Activated CD8-positive, alpha-beta memory T cell treated with anti-CD3 and anti-CD28 coated beads, Interleukin-2, amount 10 ng/mL, durations not matched to agents 7 days and 5 days (primary cell): ENCODE measurements at regions of chr6 and their contacts with region 1.

Region 1: DNA sequence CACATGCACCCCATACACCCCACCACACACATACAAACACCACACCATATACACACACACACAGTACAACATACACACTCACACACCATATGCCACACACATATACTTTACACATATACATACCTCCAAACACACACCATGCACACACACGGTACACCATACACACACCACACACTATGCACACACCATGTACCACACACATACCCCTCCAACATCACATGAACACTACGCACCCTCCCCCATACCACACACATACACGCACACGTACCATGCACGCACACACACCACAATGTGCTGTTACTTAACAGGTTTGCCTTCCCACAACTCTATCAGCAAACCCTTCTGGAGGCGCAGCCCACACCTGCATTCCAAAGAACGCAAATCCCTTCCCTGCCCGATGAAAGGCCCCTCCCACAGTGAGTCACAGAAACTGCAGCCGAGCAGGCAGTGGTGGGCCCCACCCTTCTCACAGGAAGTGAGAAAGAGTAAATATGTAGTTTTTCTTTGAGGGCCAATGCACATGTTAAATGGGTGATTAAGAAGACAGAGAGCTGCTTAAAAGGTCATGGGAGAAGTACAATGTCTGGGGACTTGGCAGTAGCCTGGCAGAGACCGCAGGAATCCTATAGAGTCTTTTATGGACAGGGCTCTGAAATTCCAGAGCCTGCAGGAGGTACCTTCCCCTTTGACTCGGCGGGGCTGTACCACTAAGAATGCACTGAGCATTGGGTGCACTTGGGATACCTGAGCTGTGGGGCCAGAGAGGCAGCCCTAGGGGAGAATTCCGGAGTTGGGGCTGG is 34.1 kb upstream of the EZR start:
- DNase-seq: peak; percentile 94
- ATAC-seq: peak; percentile 80
- H3K4me3 Mint-ChIP-seq: no peak overlapping the region
- H3K27ac Mint-ChIP-seq: no peak overlapping the region
- H3K4me1 Mint-ChIP-seq: peaks cover 25% of the 10 kb centered on the region
- H3K27me3 Mint-ChIP-seq: peaks cover 2% of the 10 kb centered on the region

Region 2: GRCh38 chr6:158819213-158819909 is 33.9 kb before region 1 on chr6 and contains the start of gene EZR:
- CTCF ChIA-PET with region 1: interaction called, 13 read pairs
- DNase-seq: peak; percentile 89
- ATAC-seq: peak; percentile 64
- H3K4me3 Mint-ChIP-seq: peak within 1 kb of the TSS; percentile 99
- H3K27ac Mint-ChIP-seq: peak within 1 kb of the TSS; percentile 86
- H3K4me1 Mint-ChIP-seq: peaks cover 42% of the 10 kb centered on the region
- H3K27me3 Mint-ChIP-seq: no peaks in the 10 kb centered on the region
- total RNA-seq, gene EZR: 187 to 214 TPM

Region 3: GRCh38 chr6:158837684-158838625 is 15.3 kb before region 1 on chr6:
- CTCF ChIA-PET with region 1: no interaction called
- DNase-seq: no peak
- ATAC-seq: no peak
- H3K4me3 Mint-ChIP-seq: no peak overlapping the region
- H3K27ac Mint-ChIP-seq: no peak overlapping the region
- H3K4me1 Mint-ChIP-seq: no peaks in the 10 kb centered on the region
- H3K27me3 Mint-ChIP-seq: peaks cover 8% of the 10 kb centered on the region

Region 4: GRCh38 chr6:158869826-158870648 is 16.8 kb after region 1 on chr6:
- CTCF ChIA-PET with region 1: interaction called, 38 read pairs
- DNase-seq: peak; percentile 98
- ATAC-seq: peak; percentile 92
- H3K4me3 Mint-ChIP-seq: peak overlapping the region; percentile 81
- H3K27ac Mint-ChIP-seq: peak overlapping the region; percentile 99
- H3K4me1 Mint-ChIP-seq: peaks cover 35% of the 10 kb centered on the region
- H3K27me3 Mint-ChIP-seq: peaks cover 12% of the 10 kb centered on the region

Region 5: DNA sequence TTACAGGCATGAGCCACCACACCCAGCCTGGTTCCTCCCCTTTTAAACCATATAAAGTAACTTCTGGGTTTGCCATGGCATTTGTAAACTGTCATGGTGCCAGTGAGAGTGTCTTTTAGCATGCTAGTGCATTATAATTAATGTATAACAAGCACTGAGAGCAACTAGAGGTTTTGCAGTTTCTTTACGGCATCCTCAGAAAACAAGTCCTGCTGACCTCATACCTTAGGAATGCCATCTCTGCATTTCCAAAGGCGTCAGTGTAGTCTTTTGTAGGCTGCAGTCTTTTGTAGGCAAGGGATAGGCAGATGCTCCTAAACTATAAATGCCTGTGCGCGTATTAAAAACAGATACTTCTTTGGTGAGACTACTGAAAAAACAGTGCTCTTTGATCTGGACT is 40.9 kb after region 1 on chr6:
- CTCF ChIA-PET with region 1: no interaction called
- DNase-seq: no peak
- ATAC-seq: no peak
- H3K4me3 Mint-ChIP-seq: no peak overlapping the region
- H3K27ac Mint-ChIP-seq: no peak overlapping the region
- H3K4me1 Mint-ChIP-seq: no peaks in the 10 kb centered on the region
- H3K27me3 Mint-ChIP-seq: no peaks in the 10 kb centered on the region